CD4-positive, alpha-beta memory T cell (primary cell): ENCODE measurements at regions of chr1 and their contacts with region 1.

Region 1: DNA sequence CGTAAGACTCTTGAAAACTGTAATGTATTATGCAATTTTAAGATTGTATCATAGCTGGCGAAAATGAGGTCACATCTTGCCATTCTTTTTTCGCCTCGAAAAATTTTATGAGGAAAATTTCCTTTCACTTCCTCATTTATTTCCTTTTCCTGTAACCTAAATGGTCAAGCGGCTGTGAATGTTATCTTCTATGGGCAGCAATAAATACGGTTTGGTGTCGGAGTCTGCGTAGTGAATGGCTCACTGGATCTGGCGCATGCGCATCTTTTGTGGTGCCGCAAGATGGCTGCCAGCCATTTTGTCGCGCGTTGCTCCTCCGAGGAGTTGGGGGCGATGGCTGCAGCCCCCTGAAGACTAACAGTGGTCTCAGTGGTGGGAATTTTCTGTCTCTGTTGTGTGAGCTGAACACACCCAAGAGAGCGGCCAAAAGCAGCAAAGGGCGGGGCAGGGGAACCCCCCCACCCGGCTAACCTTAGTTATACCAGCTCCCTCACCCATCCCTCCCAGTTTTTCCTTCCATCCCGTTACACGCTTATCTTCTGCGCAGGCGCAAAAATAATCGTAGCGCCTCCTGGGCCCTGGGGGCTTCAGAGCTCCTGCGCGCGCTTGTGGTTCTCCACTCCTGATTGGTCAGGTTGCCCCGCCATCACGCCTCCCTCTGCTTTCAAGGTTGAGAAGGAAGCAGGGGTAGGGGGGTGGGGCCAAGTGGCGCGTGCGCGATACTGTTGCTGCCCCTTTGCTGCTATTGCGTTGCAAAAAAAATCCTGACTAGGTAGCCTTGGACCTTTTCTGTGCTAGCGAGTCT is at the start of gene RPRD2:
- DNase-seq: peak; percentile 99 to 100 (median 99)
- H3K4me3 ChIP-seq: peak within 1 kb of the TSS; percentile 98 to 100
- H3K4me3 Mint-ChIP-seq: peak within 1 kb of the TSS; percentile 94 to 100 (median 99)
- H3K27ac ChIP-seq: peak within 1 kb of the TSS; percentile 96
- H3K27ac Mint-ChIP-seq: peak within 1 kb of the TSS; percentile 97 to 100 (median 99)
- H3K4me1 ChIP-seq: peaks cover 27% of the 10 kb centered on the region
- H3K4me1 Mint-ChIP-seq: peaks cover 22 to 49% (median 28%) of the 10 kb centered on the region in 4 donors
- H3K27me3 ChIP-seq: no peaks in the 10 kb centered on the region
- H3K27me3 Mint-ChIP-seq: no peaks in the 10 kb centered on the region
- total RNA-seq, gene RPRD2: 60.0 to 61.0 TPM

Region 2: GRCh38 chr1:150235852-150236613 is 127.6 kb before region 1 on chr1 and contains the start of gene ANP32E:
- CTCF ChIA-PET with region 1: no interaction called
- POLR2A ChIA-PET with region 1: interaction called, 22 read pairs
- intact Hi-C with region 1: loop called (anchors 2 kb)
- DNase-seq: peak; percentile 96 to 99 (median 98)
- H3K4me3 ChIP-seq: peak within 1 kb of the TSS; percentile 76 to 100
- H3K4me3 Mint-ChIP-seq: peak within 1 kb of the TSS in 6 of 8 donors; percentile 26 to 96 (median 94)
- H3K27ac ChIP-seq: peak within 1 kb of the TSS; percentile 99
- H3K27ac Mint-ChIP-seq: peak within 1 kb of the TSS in 6 of 7 donors; percentile 96 to 100 (median 99)
- H3K4me1 ChIP-seq: peaks cover 22% of the 10 kb centered on the region
- H3K4me1 Mint-ChIP-seq: peaks cover 12 to 19% (median 16%) of the 10 kb centered on the region in 4 donors
- H3K27me3 ChIP-seq: no peaks in the 10 kb centered on the region
- H3K27me3 Mint-ChIP-seq: no peaks in the 10 kb centered on the region
- total RNA-seq, gene ANP32E: 53.4 to 57.9 TPM

Region 3: GRCh38 chr1:150293433-150294168 is 70.0 kb before region 1 on chr1 and contains the start of gene MRPS21:
- CTCF ChIA-PET with region 1: no interaction called
- POLR2A ChIA-PET with region 1: interaction called, 4 read pairs
- intact Hi-C with region 1: loop called (anchors 1 kb)
- DNase-seq: peak; percentile 86 to 90 (median 90)
- H3K4me3 ChIP-seq: peak within 1 kb of the TSS; percentile 52 to 67
- H3K4me3 Mint-ChIP-seq: peak within 1 kb of the TSS; percentile 89 to 96 (median 94)
- H3K27ac ChIP-seq: peak within 1 kb of the TSS; percentile 90
- H3K27ac Mint-ChIP-seq: peak within 1 kb of the TSS; percentile 92 to 100 (median 98)
- H3K4me1 ChIP-seq: peaks cover 20% of the 10 kb centered on the region
- H3K4me1 Mint-ChIP-seq: peaks cover 20 to 34% (median 29%) of the 10 kb centered on the region in 4 donors
- H3K27me3 ChIP-seq: no peaks in the 10 kb centered on the region
- H3K27me3 Mint-ChIP-seq: no peaks in the 10 kb centered on the region
- total RNA-seq, gene MRPS21: 62.9 to 68.7 TPM

Region 4: DNA sequence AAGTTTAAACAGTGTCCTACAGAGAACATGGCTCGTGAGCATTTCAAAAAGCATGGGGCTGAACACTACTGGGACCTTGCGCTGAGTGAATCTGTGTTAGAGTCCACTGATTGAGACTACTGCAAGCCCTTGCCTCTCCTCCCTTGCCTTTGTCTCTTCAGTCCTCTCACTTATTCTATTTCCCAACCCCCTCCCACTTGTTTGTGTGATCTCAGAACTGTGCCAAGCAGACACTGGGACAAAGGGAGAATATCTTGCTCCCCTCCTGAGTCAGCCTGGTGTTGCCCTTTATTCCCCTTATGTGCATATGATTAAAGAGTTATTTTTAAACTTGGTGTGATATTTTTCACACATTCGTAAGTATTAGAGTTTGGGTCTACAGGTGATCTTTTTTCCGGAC is 10.8 kb before region 1 on chr1:
- CTCF ChIA-PET with region 1: no interaction called
- POLR2A ChIA-PET with region 1: interaction called, 29 read pairs
- intact Hi-C with region 1: no loop called
- DNase-seq: no peak
- H3K4me3 ChIP-seq: no peak overlapping the region
- H3K4me3 Mint-ChIP-seq: no peak overlapping the region
- H3K27ac ChIP-seq: no peak overlapping the region
- H3K27ac Mint-ChIP-seq: peak overlapping the region in 3 of 7 donors; percentile 53 to 60 (median 53)
- H3K4me1 ChIP-seq: no peaks in the 10 kb centered on the region
- H3K4me1 Mint-ChIP-seq: no peaks in the 10 kb centered on the region
- H3K27me3 ChIP-seq: no peaks in the 10 kb centered on the region
- H3K27me3 Mint-ChIP-seq: no peaks in the 10 kb centered on the region

Region 5: GRCh38 chr1:150429805-150430204 is 66.2 kb after region 1 on chr1:
- CTCF ChIA-PET with region 1: interaction called, 4 read pairs
- POLR2A ChIA-PET with region 1: interaction called, 3 read pairs
- intact Hi-C with region 1: loop called (anchors 1 kb)
- DNase-seq: peak in 4 of 5 donors; percentile 10 to 26 (median 12)
- H3K4me3 ChIP-seq: no peak overlapping the region
- H3K4me3 Mint-ChIP-seq: no peak overlapping the region
- H3K27ac ChIP-seq: no peak overlapping the region
- H3K27ac Mint-ChIP-seq: peak overlapping the region in 5 of 7 donors; percentile 4 to 81 (median 75)
- H3K4me1 ChIP-seq: no peaks in the 10 kb centered on the region
- H3K4me1 Mint-ChIP-seq: peaks cover 6 to 16% (median 11%) of the 10 kb centered on the region in 4 donors
- H3K27me3 ChIP-seq: no peaks in the 10 kb centered on the region
- H3K27me3 Mint-ChIP-seq: no peaks in the 10 kb centered on the region

Region 6: DNA sequence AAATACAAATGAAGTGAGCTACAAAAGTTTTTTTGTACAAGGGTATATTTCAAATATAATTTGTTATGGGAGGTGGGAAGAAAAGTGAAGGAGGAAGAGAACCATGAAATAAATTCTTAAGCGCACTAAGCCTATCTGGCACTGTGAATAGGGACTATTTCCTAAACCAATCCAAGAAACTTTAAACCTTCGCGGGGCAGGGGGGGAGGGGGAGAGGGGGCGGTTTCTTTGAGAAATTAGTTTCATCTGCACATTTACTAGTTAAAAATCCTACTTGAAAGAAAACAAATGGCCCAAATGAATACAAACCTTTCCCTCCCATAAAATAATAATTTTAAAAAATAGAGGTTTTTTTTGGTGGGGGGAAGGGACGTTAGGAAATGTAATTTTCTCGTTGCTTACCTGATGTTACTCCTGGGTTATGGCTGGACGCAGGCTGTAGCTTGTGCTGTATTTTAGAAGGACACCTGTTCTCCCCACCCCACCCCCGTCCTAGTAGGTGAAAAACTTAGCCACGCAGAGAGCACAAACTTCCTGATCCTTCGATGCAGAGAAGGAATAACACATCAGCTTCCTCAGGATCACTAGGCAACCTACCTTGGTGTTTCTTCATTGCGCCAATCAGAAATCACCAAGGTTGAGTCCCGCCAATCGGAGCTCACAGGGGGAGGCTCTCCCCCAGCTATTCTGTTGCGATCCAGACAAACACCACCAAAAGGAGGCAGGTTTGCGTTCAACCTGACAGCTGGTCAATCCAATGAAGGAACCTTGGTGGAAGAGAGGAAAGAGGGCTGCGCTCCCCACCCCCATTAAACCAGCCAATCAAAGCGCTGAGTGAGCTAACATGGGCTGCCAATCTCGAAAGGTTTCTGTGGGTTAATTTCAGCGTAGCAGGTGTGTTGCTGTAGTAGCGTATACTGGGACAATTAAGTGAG is 333.2 kb after region 1 on chr1 and contains the start of gene GOLPH3L:
- CTCF ChIA-PET with region 1: no interaction called
- POLR2A ChIA-PET with region 1: interaction called, 11 read pairs
- intact Hi-C with region 1: no loop called
- DNase-seq: peak; percentile 90 to 97 (median 93)
- H3K4me3 ChIP-seq: peak within 1 kb of the TSS; percentile 86 to 92
- H3K4me3 Mint-ChIP-seq: peak within 1 kb of the TSS; percentile 94 to 100 (median 98)
- H3K27ac ChIP-seq: peak within 1 kb of the TSS; percentile 70
- H3K27ac Mint-ChIP-seq: peak within 1 kb of the TSS; percentile 88 to 100 (median 96)
- H3K4me1 ChIP-seq: peaks cover 27% of the 10 kb centered on the region
- H3K4me1 Mint-ChIP-seq: peaks cover 17 to 40% (median 27%) of the 10 kb centered on the region in 4 donors
- H3K27me3 ChIP-seq: no peaks in the 10 kb centered on the region
- H3K27me3 Mint-ChIP-seq: peaks cover 1 to 3% of the 10 kb centered on the region in 2 donors
- total RNA-seq, gene GOLPH3L: 29.7 to 30.4 TPM

Region 7: DNA sequence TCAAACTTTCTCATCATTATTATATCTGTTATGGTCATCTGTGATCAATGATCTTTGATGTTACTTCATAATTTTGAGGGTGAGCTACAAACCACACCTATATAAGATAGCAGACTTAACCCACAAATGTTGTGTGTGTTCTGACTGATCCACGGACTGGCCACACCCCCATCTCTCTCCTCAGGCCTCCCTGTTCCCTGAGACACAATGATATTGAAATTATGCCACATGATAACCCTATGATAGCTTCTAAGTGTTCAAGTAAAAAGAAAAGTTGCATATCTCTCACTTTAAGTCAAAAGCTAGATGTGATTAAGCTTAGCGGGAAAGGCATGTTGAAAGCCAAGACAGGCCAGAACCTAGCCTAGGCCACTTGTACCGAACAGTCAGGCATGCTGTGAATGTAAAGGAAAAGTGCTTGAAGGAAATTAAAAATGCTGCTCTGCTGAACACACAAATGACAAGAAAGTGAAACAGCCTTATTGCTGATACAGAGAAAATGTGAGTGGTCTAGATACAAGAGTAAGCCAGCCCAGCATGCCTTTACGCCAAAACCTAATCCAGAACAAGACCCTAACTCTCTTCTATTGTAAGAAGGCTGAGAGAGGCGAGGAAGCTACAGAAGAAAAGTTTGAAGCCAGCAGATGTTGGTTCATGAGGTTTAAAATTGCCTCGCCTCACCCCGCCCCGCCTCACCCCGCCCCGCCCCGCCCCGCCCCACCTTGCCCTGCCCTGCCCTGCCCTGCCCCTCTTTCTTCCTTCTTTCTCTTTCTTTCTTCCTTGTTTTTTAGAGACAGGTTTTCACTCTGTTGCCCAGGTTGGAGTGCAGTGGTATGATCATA is 385.5 kb after region 1 on chr1:
- CTCF ChIA-PET with region 1: no interaction called
- POLR2A ChIA-PET with region 1: no interaction called
- intact Hi-C with region 1: no loop called
- DNase-seq: no peak
- H3K4me3 ChIP-seq: no peak overlapping the region
- H3K4me3 Mint-ChIP-seq: no peak overlapping the region
- H3K27ac ChIP-seq: no peak overlapping the region
- H3K27ac Mint-ChIP-seq: peak overlapping the region in 4 of 7 donors; percentile 7 to 85 (median 9)
- H3K4me1 ChIP-seq: no peaks in the 10 kb centered on the region
- H3K4me1 Mint-ChIP-seq: peaks cover 0 to 1% (median under 1%) of the 10 kb centered on the region in 4 donors
- H3K27me3 ChIP-seq: no peaks in the 10 kb centered on the region
- H3K27me3 Mint-ChIP-seq: no peaks in the 10 kb centered on the region